ENCODE measurements at regions of chr2 and their contacts with region 1.

Region 1: GRCh38 chr2:175030380-175031271 is 25.4 kb upstream of the CHN1 start:
- DNase-seq: peak; percentile 77
- ATAC-seq: peak; percentile 97
- H3K4me3 ChIP-seq: peak overlapping the region; percentile 17 to 61 (median 33); a peak in 5 of 6 replicates
- H3K27ac ChIP-seq: peak overlapping the region; percentile 56
- H3K4me1 ChIP-seq: peaks cover 40% of the 10 kb centered on the region
- H3K27me3 ChIP-seq: no peaks in the 10 kb centered on the region
- CTCF ChIP-seq: peak; percentile 91
- EP300 ChIP-seq: peak in 1 of 2 experiments; percentile 29; a peak in 1 of 4 replicates
- POLR2A ChIP-seq: peak; percentile 60 to 89; a peak in 3 of 4 replicates
- RAD21 ChIP-seq: peak; percentile 79; the same call in 1 of the 2 replicates

Region 2: GRCh38 chr2:173462892-173463840 is 1567.5 kb before region 1 on chr2:
- CTCF ChIA-PET with region 1: no interaction called
- POLR2A ChIA-PET with region 1: no interaction called
- in situ Hi-C with region 1: no loop called
- intact Hi-C with region 1: no loop called
- DNase-seq: peak; percentile 77
- ATAC-seq: peak; percentile 90
- H3K4me3 ChIP-seq: peak overlapping the region; percentile 18 to 55 (median 31); a peak in 5 of 6 replicates
- H3K27ac ChIP-seq: peak overlapping the region; percentile 32
- H3K4me1 ChIP-seq: peaks cover 30% of the 10 kb centered on the region
- H3K27me3 ChIP-seq: peaks cover 2 to 5% of the 10 kb centered on the region in 2 experiments; a peak in 1 of 5 replicates
- CTCF ChIP-seq: peak; percentile 81
- EP300 ChIP-seq: no peak; a peak in 1 of 4 replicates
- POLR2A ChIP-seq: no peak
- RAD21 ChIP-seq: no peak

Region 3: DNA sequence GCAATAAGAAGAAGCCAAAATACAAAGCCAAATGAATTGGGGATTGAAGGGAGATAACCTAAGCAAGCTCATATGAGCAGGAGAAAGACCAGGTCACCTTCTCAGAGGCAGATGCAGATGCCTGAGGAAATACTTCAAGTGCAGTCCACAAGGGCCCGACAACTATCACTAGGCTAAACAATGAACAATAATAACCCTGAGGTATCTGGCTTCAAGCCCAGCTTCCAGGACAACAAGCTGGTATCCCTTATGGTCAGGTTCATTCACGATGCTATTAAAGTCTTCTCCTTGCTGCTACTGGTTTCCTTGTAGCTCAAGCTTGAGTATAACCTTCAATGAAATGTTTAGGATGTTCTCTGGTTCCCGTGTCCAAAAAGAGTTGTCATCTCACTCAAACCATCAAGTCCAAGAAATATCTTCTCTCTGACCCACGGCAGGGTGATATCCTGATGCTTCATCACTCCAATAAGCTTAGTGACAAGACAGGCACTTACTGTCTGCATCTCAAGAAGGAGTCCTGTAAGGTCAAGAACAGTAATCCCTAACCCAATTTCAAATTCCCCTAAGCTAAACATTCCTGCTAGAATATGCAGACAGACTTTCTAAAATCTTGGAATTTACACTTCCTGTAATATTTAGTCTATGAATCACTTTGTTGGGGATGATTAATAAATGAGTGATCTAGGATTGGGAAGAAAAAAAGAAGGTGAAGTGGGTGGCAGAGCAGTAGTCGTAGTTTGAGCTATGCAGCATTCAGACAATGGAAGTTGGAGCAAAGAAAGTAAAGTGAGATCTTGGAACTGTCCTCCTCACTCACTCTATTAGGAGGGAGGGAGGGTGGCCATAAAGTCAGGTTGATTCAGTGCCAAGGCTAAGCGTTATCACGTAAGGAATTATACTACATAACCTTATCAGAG is 58.5 kb before region 1 on chr2:
- CTCF ChIA-PET with region 1: no interaction called
- POLR2A ChIA-PET with region 1: no interaction called
- in situ Hi-C with region 1: no loop called
- intact Hi-C with region 1: no loop called
- DNase-seq: no peak
- ATAC-seq: no peak
- H3K4me3 ChIP-seq: no peak overlapping the region
- H3K27ac ChIP-seq: no peak overlapping the region
- H3K4me1 ChIP-seq: no peaks in the 10 kb centered on the region
- H3K27me3 ChIP-seq: no peaks in the 10 kb centered on the region
- CTCF ChIP-seq: no peak
- EP300 ChIP-seq: no peak
- POLR2A ChIP-seq: no peak
- RAD21 ChIP-seq: no peak

Region 4: GRCh38 chr2:175097297-175097696 is 66.7 kb after region 1 on chr2:
- CTCF ChIA-PET with region 1: no interaction called
- POLR2A ChIA-PET with region 1: no interaction called
- in situ Hi-C with region 1: no loop called
- intact Hi-C with region 1: loop called (anchors 5 kb)
- DNase-seq: no peak
- ATAC-seq: no peak
- H3K4me3 ChIP-seq: no peak overlapping the region
- H3K27ac ChIP-seq: no peak overlapping the region
- H3K4me1 ChIP-seq: no peaks in the 10 kb centered on the region
- H3K27me3 ChIP-seq: no peaks in the 10 kb centered on the region
- CTCF ChIP-seq: no peak
- EP300 ChIP-seq: no peak
- POLR2A ChIP-seq: no peak
- RAD21 ChIP-seq: no peak

Region 5: DNA sequence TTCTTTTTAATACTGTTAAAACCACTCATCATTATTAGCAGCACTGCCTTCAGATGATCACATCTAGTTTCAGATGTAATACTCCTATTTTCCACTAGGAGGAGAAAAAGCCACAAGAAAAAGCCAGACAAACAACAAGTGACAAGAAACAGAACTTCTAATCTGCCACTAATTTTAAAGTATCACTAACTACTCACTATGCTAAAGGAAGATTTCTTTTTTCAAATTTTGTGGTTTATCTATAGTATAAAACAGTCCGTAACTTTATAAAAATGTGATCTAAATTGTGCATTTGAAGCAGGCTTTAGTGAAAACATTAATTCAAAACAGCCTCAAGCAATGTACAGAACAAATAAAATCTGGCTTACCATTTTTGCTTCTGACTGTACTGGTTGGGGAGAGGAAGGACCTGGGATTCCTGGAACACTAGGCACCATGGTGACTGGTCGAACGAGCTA is 80.6 kb after region 1 on chr2:
- CTCF ChIA-PET with region 1: interaction called, 3 read pairs
- POLR2A ChIA-PET with region 1: no interaction called
- in situ Hi-C with region 1: no loop called
- intact Hi-C with region 1: loop called (anchors 2 kb)
- DNase-seq: peak; percentile 61
- ATAC-seq: peak; percentile 76
- H3K4me3 ChIP-seq: no peak overlapping the region
- H3K27ac ChIP-seq: no peak overlapping the region
- H3K4me1 ChIP-seq: no peaks in the 10 kb centered on the region
- H3K27me3 ChIP-seq: no peaks in the 10 kb centered on the region
- CTCF ChIP-seq: peak; percentile 62
- EP300 ChIP-seq: no peak
- POLR2A ChIP-seq: no peak
- RAD21 ChIP-seq: peak; percentile 26; the same call in 1 of the 2 replicates

Region 6: GRCh38 chr2:175181104-175181876 is 150.7 kb after region 1 on chr2 and contains the start of gene ATP5MC3:
- CTCF ChIA-PET with region 1: no interaction called
- POLR2A ChIA-PET with region 1: no interaction called
- in situ Hi-C with region 1: loop called (anchors 10 kb)
- intact Hi-C with region 1: loop called (anchors 2 kb)
- DNase-seq: peak; percentile 96
- ATAC-seq: peak; percentile 95
- H3K4me3 ChIP-seq: peak within 1 kb of the TSS; percentile 74 to 97 (median 82)
- H3K27ac ChIP-seq: peak within 1 kb of the TSS; percentile 88
- H3K4me1 ChIP-seq: peaks cover 32% of the 10 kb centered on the region
- H3K27me3 ChIP-seq: no peaks in the 10 kb centered on the region; a peak in 2 of 5 replicates
- CTCF ChIP-seq: peak; percentile 43; the same call in 1 of the 2 replicates
- EP300 ChIP-seq: peak in 1 of 2 experiments; percentile 57; a peak in 2 of 4 replicates
- POLR2A ChIP-seq: peak; percentile 83 to 98
- RAD21 ChIP-seq: no peak
- total RNA-seq, gene ATP5MC3: 676 and 882 TPM in 2 replicates

Region 7: DNA sequence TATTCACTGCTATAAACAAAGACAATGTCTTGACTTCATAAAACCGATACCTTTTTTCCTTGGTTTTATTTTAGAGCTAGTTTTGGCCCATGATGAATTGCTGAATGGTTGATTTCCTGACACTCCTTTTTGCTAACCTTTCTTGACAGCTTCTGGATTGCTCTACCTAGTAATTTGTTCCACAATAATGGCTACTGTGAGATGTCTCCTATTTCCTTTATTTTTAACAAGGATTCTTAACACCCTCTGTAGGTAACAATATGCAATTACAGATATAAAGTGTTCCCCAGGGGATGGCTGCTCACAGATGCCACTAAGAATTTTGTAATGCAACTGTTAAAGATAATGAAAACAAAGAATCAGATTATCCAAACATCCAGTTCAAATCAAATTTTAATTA is 251.7 kb after region 1 on chr2:
- CTCF ChIA-PET with region 1: interaction called, 3 read pairs
- POLR2A ChIA-PET with region 1: no interaction called
- in situ Hi-C with region 1: loop called (anchors 25 kb)
- intact Hi-C with region 1: loop called (anchors 1 kb)
- DNase-seq: peak; percentile 20
- ATAC-seq: peak; percentile 82
- H3K4me3 ChIP-seq: no peak overlapping the region
- H3K27ac ChIP-seq: no peak overlapping the region
- H3K4me1 ChIP-seq: no peaks in the 10 kb centered on the region
- H3K27me3 ChIP-seq: peaks cover 0 to 5% of the 10 kb centered on the region in 2 experiments; a peak in 2 of 5 replicates
- CTCF ChIP-seq: peak; percentile 61
- EP300 ChIP-seq: no peak
- POLR2A ChIP-seq: no peak
- RAD21 ChIP-seq: no peak

Region 8: DNA sequence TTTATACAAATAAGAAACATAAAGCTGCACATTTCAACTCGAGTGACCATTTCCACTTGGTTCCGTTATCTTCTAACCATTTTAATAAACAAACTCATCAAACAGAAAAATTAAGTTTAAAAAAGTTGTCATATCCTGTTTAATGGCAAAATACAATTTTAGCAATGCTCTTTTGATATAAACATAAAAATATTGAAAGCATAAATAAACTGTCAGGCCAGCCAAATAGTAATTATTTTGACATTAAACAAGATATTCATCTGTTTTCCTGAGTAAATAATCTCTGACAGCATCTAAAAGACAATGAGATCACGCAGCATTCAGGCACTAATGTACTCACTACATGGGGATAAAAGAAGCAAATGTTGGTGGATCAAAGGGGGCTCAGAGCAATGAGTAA is 296.2 kb after region 1 on chr2:
- CTCF ChIA-PET with region 1: no interaction called
- POLR2A ChIA-PET with region 1: no interaction called
- in situ Hi-C with region 1: no loop called
- intact Hi-C with region 1: loop called (anchors 2 kb)
- DNase-seq: no peak
- ATAC-seq: no peak
- H3K4me3 ChIP-seq: no peak overlapping the region
- H3K27ac ChIP-seq: no peak overlapping the region
- H3K4me1 ChIP-seq: no peaks in the 10 kb centered on the region
- H3K27me3 ChIP-seq: no peaks in the 10 kb centered on the region
- CTCF ChIP-seq: no peak
- EP300 ChIP-seq: no peak
- POLR2A ChIP-seq: no peak
- RAD21 ChIP-seq: no peak

Region 9: GRCh38 chr2:176110975-176111663 is 1080.5 kb after region 1 on chr2:
- CTCF ChIA-PET with region 1: no interaction called
- POLR2A ChIA-PET with region 1: no interaction called
- in situ Hi-C with region 1: loop called (anchors 10 kb)
- intact Hi-C with region 1: no loop called
- DNase-seq: peak; percentile 50
- ATAC-seq: peak; percentile 62
- H3K4me3 ChIP-seq: no peak overlapping the region
- H3K27ac ChIP-seq: no peak overlapping the region
- H3K4me1 ChIP-seq: peaks cover 14% of the 10 kb centered on the region
- H3K27me3 ChIP-seq: peaks cover 16 to 88% of the 10 kb centered on the region in 2 experiments; a peak in 4 of 5 replicates
- CTCF ChIP-seq: peak; percentile 87
- EP300 ChIP-seq: no peak
- POLR2A ChIP-seq: no peak
- RAD21 ChIP-seq: peak; percentile 32; the same call in 1 of the 2 replicates

Measured in HepG2 (cell line).